ENCODE measurements at regions of chr3 and their contacts with region 1.

Region 1: GRCh38 chr3:125072301-125072700 is 16.5 kb upstream of the HEG1 start:
- DNase-seq: no peak
- ATAC-seq: no peak
- H3K4me3 ChIP-seq: no peak overlapping the region
- H3K27ac ChIP-seq: no peak overlapping the region
- H3K4me1 ChIP-seq: peaks cover 0 to 16% (median 3%) of the 10 kb centered on the region in 9 donors
- H3K27me3 ChIP-seq: no peaks in the 10 kb centered on the region
- CTCF ChIP-seq: no peak

Region 2: GRCh38 chr3:123642182-123642956 is 1429.9 kb before region 1 on chr3:
- intact Hi-C with region 1: no loop called
- DNase-seq: peak; percentile 59 to 65
- ATAC-seq: peak; percentile 65 to 84 (median 72)
- H3K4me3 ChIP-seq: no peak overlapping the region
- H3K27ac ChIP-seq: no peak overlapping the region
- H3K4me1 ChIP-seq: peaks cover 0 to 5% (median 0%) of the 10 kb centered on the region in 9 donors
- H3K27me3 ChIP-seq: no peaks in the 10 kb centered on the region
- CTCF ChIP-seq: peak; percentile 50 to 79 (median 71)

Region 3: GRCh38 chr3:125055913-125056745 is 16.2 kb before region 1 on chr3 and contains the start of gene HEG1:
- intact Hi-C with region 1: no loop called
- DNase-seq: peak; percentile 93 to 94
- ATAC-seq: peak; percentile 89 to 94 (median 92)
- H3K4me3 ChIP-seq: peak within 1 kb of the TSS; percentile 79 to 96 (median 85)
- H3K27ac ChIP-seq: peak within 1 kb of the TSS; percentile 92 to 99 (median 96)
- H3K4me1 ChIP-seq: peaks cover 20 to 76% (median 63%) of the 10 kb centered on the region in 9 donors
- H3K27me3 ChIP-seq: no peaks in the 10 kb centered on the region
- CTCF ChIP-seq: no peak
- total RNA-seq, gene HEG1: 79.0 to 186 (median 143) TPM

Region 4: DNA sequence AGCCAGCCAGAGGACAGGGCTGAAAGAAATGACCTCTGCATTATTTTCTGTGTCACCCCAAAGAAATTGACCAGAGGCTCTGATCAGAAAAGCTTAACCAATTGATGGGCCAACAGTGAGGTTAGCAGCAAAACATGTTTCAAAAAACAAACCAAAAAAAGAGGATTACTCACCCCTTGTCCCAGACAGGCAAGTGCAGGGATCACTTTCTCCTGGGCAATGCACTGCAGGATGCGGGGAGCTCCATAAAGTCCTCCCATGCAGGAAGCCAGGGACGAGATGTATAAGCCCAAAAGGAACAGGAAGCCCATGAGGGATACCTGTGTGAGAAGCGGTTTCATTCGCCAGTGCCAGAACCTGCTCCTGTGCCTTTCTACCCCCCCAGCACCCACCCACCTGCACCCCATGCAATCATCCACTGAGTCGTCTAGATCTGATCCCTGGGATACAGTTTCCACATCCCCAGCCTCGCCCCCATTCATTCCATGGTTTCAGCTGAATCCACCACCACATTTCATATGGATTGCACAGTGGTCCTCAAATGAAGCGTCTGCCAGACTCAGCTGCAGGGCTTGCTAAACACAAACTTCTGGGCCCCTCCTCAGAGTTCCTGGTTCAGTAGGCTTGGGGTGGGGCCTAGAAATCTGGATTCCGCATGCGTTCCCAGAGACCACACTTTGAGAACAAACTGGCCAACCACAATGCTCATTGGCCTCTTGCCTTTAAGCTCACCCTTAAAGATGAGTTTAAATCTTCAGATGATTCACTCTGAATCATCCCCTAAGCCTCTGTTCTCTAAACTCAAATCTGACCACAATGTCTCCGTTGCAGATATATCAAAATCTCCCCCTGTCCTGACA is 37.9 kb after region 1 on chr3:
- intact Hi-C with region 1: loop called in 1 of 10 experiments (anchors 5 kb)
- DNase-seq: no peak
- ATAC-seq: no peak
- H3K4me3 ChIP-seq: no peak overlapping the region
- H3K27ac ChIP-seq: no peak overlapping the region
- H3K4me1 ChIP-seq: peaks cover 0 to 22% (median 3%) of the 10 kb centered on the region in 9 donors
- H3K27me3 ChIP-seq: no peaks in the 10 kb centered on the region
- CTCF ChIP-seq: no peak

Measured in heart right ventricle (tissue), 16 donors.